Posterior cingulate gyrus (tissue), 11 donors: ENCODE measurements at regions of chr1 and their contacts with region 1.

Region 1: GRCh38 chr1:179706339-179706941 is 36.7 kb upstream of the FAM163A start:
- DNase-seq: peak in 7 of 10 donors; percentile 43 to 85 (median 56)

Region 2: GRCh38 chr1:179814546-179814838 is 108.1 kb after region 1 on chr1:
- intact Hi-C with region 1: loop called (anchors 1 kb)
- DNase-seq: peak in 3 of 10 donors; percentile 49 to 75 (median 55)

Region 3: DNA sequence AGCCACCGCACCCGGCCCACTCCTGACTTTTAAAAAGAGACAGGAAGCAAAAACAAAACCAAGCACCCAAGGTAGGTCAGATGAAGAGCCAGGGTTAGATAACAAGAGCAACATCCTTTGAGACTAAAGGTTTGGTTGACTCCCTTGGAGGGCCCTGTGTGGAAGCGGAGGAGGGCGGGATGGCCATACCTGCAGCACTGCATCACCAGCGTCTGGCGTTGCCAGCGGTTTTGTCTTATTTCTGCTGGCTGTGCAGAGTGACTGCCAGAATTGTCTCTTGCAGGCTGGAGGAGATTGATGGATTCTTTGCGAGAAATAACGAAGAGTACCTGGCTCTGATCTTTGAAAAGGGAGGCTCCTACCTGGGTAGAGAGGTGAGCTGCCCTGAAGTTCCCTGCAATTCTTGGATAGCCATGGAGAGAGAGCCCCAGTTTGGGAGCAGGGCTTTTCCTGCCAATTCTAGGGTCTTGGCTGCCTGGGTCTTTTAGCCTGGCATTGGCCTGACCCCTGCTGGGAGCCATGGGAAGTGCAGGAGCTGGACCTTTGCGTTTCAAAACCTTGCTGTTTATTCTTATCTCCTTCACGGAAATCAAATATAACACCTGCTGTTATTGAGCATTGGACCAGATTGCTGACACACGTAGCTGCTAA is 472.2 kb after region 1 on chr1:
- intact Hi-C with region 1: loop called (anchors 2 kb)
- DNase-seq: peak in 9 of 10 donors; percentile 46 to 95 (median 73)